Colonic mucosa (tissue), 4 donors: ENCODE measurements at regions of chr5 and their contacts with region 1.

Region 1: DNA sequence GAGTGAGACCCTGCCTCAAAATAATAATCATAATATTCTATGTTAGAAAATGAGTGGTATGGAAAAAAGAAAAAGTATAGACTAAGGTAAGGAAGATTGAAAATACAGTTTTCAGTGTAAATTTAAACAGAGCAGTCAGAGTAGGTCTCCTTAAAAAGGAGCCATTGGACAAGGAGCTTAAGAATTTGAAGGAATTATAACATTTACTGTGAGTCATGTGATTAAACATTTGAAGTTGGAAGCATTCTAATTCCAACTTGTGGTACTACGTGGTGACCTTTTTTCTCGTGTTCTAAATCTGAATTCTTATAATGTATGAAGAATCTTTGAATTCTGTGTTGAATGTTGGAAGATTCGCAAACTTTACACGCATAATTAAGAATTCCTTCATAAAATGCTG is 39.3 kb upstream of the TMEM171 start:
- DNase-seq: no peak
- H3K4me3 ChIP-seq: no peak overlapping the region
- H3K27ac ChIP-seq: no peak overlapping the region
- H3K4me1 ChIP-seq: no peaks in the 10 kb centered on the region
- H3K27me3 ChIP-seq: no peaks in the 10 kb centered on the region
- CTCF ChIP-seq: no peak

Region 2: DNA sequence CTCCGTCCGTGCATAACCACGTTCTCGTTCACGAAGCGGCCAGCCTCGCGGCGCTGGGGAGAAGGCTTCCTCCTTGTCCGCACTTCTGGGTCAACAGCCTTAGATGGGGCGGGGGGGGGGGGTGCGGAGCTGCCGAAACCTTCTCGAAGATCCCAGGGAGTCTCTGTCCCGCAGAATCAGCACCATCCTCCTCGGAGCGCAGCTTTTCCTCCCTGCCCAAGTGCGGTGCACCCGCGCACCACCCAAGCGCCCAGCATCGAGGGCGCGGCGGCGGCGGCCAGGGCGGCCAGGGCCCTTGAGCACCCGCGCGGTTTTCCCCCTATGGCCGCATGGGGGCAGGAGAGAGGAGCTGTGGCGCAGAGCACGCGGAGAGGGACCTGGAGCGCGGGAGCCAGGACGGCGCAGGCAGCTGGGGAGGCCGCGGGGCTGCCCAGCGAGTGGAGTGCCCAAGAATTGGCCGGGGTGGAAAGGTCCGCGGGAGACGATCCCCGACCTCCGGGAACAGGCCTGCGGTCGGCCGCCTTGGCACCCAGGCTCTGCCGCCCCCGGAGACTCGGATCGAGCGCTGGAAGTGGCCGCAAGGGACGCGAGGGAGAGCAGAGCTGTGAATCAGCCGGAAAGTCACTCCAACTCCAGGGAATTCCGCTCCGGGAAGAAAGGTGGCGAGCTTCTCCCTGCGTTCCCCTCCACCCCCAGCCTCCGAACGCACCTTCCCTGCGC is 135.0 kb after region 1 on chr5:
- intact Hi-C with region 1: loop called (anchors 5 kb)
- DNase-seq: peak; percentile 87
- H3K4me3 ChIP-seq: peak overlapping the region; percentile 33
- H3K27ac ChIP-seq: no peak overlapping the region
- H3K4me1 ChIP-seq: no peaks in the 10 kb centered on the region
- H3K27me3 ChIP-seq: peaks cover 40% of the 10 kb centered on the region
- CTCF ChIP-seq: peak; percentile 80